ENCODE measurements at regions of chr5 and their contacts with region 1.

Region 1: DNA sequence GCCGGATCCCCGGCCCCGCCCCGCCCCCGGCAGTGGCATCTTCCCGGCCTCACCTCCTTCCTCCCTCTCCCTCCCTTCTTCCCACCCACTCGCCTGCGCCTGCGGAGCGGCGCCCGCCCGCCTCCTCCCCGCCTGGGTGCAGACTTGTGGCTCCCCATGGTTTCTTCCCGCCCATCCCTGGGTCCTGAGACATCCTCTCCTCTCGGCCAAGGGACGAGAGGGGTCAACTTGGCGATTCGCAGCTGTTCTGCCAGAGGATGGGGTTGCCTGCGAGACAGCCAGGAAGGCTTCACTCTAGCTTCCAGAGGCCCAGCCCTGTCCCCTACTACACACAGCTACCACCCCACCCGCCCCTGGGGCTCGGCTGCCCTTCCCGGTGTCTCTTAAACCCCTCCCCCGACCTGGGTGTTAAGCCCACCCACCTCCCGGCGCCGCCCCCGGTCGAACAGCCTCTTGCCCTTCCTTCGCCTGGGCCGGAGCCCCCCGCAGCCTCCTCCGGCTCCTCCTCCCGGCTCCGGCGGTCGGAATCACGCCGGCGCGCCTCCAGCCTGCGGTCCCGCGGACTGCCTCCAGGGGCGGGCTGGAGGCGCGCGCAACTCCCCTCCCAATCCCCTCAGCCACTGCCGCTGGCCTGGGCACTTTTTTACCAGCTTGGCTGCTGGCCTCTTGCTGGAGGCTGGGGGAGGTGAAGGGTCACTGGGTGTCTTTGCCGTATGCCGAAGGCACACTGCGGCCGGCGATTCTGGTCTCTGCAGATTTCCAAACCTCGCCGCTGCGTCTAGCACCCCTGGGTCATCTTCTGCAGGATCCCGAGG is 1.9 kb downstream of the JADE2 start:
- DNase-seq: peak; percentile 89 to 93 (median 90)
- ATAC-seq: peak; percentile 38 to 69 (median 69)
- H3K4me3 ChIP-seq: peak overlapping the region; percentile 62 to 98 (median 82)
- H3K27ac ChIP-seq: peak overlapping the region; percentile 94 to 100 (median 98)
- H3K4me1 ChIP-seq: peaks cover 6 to 58% (median 48%) of the 10 kb centered on the region in 12 donors
- H3K27me3 ChIP-seq: no peaks in the 10 kb centered on the region
- CTCF ChIP-seq: peak; percentile 68 to 99 (median 76)
- POLR2A ChIP-seq: peak in 1 of 2 donors; percentile 62

Region 2: DNA sequence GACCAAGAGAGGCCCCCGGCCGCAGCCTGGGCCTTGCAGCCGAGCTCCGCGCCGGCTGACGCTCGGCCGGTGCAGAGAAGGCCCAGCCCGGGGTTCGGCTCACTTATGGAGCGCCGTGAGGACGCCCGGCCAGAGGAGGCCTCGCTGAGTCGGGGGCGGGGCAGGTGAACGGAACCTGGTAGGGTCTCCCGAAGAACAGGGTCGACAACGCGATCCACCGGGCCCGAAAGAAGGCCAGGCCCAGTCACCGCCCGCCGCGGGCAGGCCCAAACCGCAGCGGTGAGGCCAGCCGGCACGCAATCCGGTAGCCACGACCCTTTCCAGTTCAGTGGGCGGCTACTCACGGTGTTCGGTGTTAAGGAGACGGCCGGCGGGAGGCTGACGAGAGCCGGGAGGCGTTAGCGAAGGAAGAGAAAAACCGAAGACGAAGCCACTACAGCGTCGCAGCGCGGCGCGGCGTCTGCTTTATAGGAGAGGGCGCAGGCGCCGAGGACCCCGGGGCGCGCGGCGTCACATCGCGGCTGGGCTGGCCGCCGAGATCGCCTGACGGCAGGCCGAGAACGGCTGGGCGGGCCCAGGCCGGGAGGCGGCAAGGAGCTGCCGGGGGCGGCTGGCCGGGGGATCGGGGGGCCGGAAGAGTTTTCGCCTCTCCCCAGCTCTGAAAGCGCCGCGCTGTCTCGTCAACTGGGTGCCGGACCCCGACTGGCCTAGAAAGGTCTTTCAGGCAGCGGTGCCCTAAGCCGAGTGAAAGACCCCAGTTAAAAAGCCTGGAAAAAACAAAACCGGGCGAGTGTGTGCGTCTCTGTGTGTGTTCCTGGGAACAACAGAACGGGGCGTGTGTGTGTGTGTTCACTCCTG is 350.6 kb before region 1 on chr5 and contains the start of gene SKP1:
- intact Hi-C with region 1: loop called in 1 of 10 experiments (anchors 5 kb)
- DNase-seq: peak; percentile 82 to 92 (median 87)
- ATAC-seq: peak; percentile 51 to 92 (median 88)
- H3K4me3 ChIP-seq: peak within 1 kb of the TSS; percentile 70 to 99 (median 96)
- H3K27ac ChIP-seq: peak within 1 kb of the TSS; percentile 95 to 100 (median 100)
- H3K4me1 ChIP-seq: peaks cover 3 to 46% (median 22%) of the 10 kb centered on the region in 12 donors
- H3K27me3 ChIP-seq: no peaks in the 10 kb centered on the region
- CTCF ChIP-seq: peak in 1 of 12 donors; percentile 14
- POLR2A ChIP-seq: peak; percentile 51 to 95
- total RNA-seq, gene SKP1: 290 to 533 (median 459) TPM

Region 3: DNA sequence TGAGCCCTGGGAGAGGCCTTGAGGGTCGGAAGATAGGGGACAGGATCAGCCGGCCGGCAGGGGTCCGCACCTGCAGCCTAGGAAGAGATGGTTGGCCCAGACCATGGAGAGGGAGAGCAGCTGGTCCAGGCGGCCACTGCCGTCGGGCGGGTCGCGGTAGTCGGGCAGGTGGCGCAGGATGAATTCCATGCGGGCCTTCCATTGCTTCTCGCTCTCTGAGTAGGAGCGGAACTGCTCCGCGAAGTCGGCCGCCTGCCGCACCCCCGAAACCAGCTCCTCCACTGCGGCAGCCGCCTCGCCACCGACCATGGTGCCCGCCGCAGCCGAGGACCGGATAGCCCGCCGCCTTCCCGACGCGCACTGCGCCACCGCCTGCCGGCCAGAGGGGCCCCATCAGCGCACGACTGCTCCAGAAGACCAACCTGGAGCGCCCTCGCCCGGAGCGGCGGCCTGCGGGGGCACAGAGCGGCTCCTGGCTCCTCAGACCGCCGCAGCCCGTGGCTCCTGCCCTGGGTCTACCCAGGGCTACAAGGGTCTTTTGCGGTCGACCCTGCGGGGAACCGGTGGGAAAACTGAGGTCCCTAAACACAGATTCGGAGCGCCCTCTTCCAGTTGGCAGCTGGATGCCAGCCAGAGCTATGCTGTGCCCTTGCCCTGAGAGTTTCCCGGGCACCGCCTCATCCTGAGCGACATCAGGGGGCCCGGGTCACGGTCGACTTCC is 115.6 kb before region 1 on chr5 and contains the start of gene CDKN2AIPNL:
- intact Hi-C with region 1: loop called (anchors 1 to 5 kb)
- DNase-seq: peak; percentile 92 to 97 (median 94)
- ATAC-seq: peak; percentile 97 to 100 (median 99)
- H3K4me3 ChIP-seq: peak within 1 kb of the TSS; percentile 62 to 98 (median 76)
- H3K27ac ChIP-seq: peak within 1 kb of the TSS; percentile 69 to 97 (median 90)
- H3K4me1 ChIP-seq: peaks cover 0 to 37% (median 22%) of the 10 kb centered on the region in 12 donors
- H3K27me3 ChIP-seq: no peaks in the 10 kb centered on the region
- CTCF ChIP-seq: peak; percentile 68 to 95 (median 78)
- POLR2A ChIP-seq: peak in 1 of 2 donors; percentile 72
- total RNA-seq, gene CDKN2AIPNL: 26.6 to 38.4 (median 32.3) TPM

Region 4: DNA sequence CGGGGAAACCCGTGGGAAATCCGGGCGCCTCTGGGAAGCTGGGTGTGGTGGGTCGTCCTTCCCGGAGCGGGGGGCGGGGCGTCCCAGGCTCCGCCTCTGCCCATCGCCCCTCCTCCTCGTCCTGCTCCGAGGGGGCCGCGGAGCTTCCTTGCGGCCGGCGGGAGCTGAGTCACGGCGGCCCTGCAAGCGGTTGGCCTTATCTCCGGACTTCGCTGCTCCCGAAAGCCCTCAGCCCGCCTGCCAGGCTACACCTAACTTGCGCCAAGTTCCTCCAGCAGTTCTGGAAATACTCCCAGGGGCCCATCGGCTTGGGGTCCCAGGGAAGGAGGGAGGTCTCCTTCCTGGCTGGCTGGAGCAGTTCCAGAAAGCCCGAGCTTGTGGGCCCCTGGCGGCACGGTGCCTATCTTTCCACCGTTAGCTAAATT is 61.5 kb before region 1 on chr5:
- intact Hi-C with region 1: loop called in 8 of 10 experiments (anchors 1 to 5 kb)
- DNase-seq: peak; percentile 89 to 95 (median 93)
- ATAC-seq: peak; percentile 81 to 90 (median 88)
- H3K4me3 ChIP-seq: peak overlapping the region; percentile 4 to 74 (median 60)
- H3K27ac ChIP-seq: peak overlapping the region; percentile 95 to 100 (median 98)
- H3K4me1 ChIP-seq: peaks cover 3 to 41% (median 30%) of the 10 kb centered on the region in 12 donors
- H3K27me3 ChIP-seq: no peaks in the 10 kb centered on the region
- CTCF ChIP-seq: no peak
- POLR2A ChIP-seq: peak in 1 of 2 donors; percentile 81

Region 5: DNA sequence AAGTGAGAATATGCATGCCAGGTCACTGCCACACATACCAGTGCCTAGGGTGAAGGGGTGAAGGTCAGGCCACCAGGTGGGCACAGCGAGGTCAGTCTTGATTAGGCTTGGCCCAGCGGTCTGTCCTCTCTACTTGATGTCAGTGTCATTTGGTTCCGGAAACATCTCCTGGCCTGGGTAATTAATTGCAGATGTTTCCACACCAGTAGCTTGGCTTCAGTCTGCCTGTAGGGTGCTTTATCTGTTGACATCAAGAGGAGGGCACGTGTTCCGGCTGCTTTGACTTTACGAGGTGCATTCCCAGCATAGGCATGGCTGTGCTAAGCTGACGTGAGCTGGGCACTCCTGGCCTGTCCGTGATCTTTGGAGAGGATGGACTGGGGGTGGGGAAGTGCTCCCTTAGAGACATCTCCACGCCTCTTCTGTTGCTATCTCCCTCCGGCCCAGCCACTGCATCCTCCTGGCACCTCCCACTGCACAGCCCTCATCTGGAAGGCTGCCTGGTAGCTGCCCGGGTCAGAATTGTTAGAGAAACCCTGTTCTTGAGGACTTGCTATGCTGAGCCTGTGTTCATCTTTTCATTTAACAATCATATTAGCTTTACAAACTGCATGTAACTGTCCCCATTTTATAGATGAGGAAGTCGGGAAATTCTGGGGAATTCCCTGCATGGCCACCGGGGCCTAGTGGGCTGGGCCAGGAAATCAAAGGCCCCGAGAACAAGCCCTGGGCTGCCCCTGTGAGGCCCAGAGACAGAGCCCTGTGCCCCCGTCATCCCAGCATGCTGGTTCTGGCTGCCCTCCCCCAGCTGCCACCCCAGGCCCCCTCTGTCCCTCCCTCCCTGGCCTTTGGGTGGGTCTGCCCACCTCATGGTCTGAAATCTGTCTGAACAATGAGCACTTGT is 27.2 kb after region 1 on chr5:
- intact Hi-C with region 1: loop called in 2 of 10 experiments (anchors 2 kb)
- DNase-seq: peak; percentile 76 to 94 (median 79)
- ATAC-seq: peak; percentile 81 to 91 (median 86)
- H3K4me3 ChIP-seq: no peak overlapping the region
- H3K27ac ChIP-seq: peak overlapping the region; percentile 54 to 94 (median 86)
- H3K4me1 ChIP-seq: peaks cover 18 to 78% (median 61%) of the 10 kb centered on the region in 12 donors
- H3K27me3 ChIP-seq: no peaks in the 10 kb centered on the region
- CTCF ChIP-seq: no peak
- POLR2A ChIP-seq: no peak

Region 6: GRCh38 chr5:134577796-134578363 is 50.5 kb after region 1 on chr5:
- intact Hi-C with region 1: loop called in 8 of 10 experiments (anchors 2 to 5 kb)
- DNase-seq: peak; percentile 71 to 89 (median 77)
- ATAC-seq: peak in 3 of 4 donors; percentile 30 to 53 (median 51)
- H3K4me3 ChIP-seq: no peak overlapping the region
- H3K27ac ChIP-seq: peak overlapping the region in 2 of 12 donors; percentile 20 to 30
- H3K4me1 ChIP-seq: peaks cover 0 to 55% (median 33%) of the 10 kb centered on the region in 12 donors
- H3K27me3 ChIP-seq: no peaks in the 10 kb centered on the region
- CTCF ChIP-seq: peak; percentile 73 to 89 (median 84)
- POLR2A ChIP-seq: no peak

Measured in heart left ventricle (tissue), 16 donors.